ENCODE measurements at regions of chr13 and their contacts with region 1.

Region 1: DNA sequence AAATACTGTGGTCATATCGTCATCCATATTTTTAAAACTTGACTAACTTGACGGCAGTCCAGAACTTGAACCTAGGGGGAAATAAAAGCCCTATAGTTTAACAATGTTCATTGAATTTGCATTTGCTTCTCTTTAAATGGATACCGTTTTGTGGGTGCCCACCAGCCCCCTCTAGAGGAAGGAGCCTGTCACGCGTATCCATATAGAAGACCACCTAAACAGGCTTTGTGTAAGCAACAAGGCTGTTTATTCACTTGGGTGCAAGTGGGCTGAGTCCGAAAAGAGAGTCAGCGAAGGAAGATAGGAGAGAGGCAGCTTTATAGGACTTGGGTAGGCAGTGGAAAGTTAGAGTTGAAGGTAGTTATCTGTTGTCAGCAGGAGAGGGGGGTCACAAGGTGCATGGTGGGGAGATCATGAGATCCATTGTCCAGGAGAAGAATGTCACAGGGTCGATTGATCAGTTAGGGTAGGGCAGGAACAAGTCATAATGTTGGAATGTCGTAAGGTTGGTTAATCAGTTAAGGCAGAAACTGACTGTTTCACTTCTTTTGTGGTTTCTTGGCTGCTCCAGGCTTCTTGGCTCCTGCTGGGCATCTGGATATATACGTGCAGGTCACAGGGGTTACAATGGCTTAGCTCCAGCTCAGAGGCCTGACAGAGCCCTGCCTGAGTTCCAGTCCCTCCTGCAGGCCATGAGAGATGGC is 42.5 kb upstream of the ANKRD10 start:
- DNase-seq: peak in 1 of 4 experiments; percentile 73
- ATAC-seq: no peak
- H3K4me3 ChIP-seq: no peak overlapping the region
- H3K27ac ChIP-seq: peak overlapping the region; percentile 73; the same call in 2 of the 3 replicates
- H3K4me1 ChIP-seq: peaks cover 5 to 19% of the 10 kb centered on the region in 2 experiments; a peak in 4 of 5 replicates
- H3K27me3 ChIP-seq: no peaks in the 10 kb centered on the region
- CTCF ChIP-seq: peak in 2 of 3 experiments; percentile 12 to 30; a peak in 1 of 6 replicates
- EP300 ChIP-seq: peak; percentile 12; the same call in 1 of the 2 replicates
- POLR2A ChIP-seq: no peak
- RAD21 ChIP-seq: no peak

Region 2: GRCh38 chr13:112392719-112393118 is 1435.4 kb after region 1 on chr13:
- CTCF ChIA-PET with region 1: no interaction called
- POLR2A ChIA-PET with region 1: no interaction called
- in situ Hi-C with region 1: loop called (anchors 10 kb)
- intact Hi-C with region 1: no loop called
- DNase-seq: peak in 2 of 4 experiments; percentile 4
- ATAC-seq: no peak
- H3K4me3 ChIP-seq: no peak overlapping the region
- H3K27ac ChIP-seq: no peak overlapping the region
- H3K4me1 ChIP-seq: no peaks in the 10 kb centered on the region
- H3K27me3 ChIP-seq: peaks cover 0 to 16% of the 10 kb centered on the region in 2 experiments; a peak in 2 of 5 replicates
- CTCF ChIP-seq: peak in 2 of 3 experiments; percentile 14 to 36; a peak in 2 of 6 replicates
- EP300 ChIP-seq: no peak
- POLR2A ChIP-seq: no peak
- RAD21 ChIP-seq: no peak

Measured in K562 (cell line).